Cardiac septum (tissue), 1 donor: ENCODE measurements at regions of chr11 and their contacts with region 1.

Region 1: DNA sequence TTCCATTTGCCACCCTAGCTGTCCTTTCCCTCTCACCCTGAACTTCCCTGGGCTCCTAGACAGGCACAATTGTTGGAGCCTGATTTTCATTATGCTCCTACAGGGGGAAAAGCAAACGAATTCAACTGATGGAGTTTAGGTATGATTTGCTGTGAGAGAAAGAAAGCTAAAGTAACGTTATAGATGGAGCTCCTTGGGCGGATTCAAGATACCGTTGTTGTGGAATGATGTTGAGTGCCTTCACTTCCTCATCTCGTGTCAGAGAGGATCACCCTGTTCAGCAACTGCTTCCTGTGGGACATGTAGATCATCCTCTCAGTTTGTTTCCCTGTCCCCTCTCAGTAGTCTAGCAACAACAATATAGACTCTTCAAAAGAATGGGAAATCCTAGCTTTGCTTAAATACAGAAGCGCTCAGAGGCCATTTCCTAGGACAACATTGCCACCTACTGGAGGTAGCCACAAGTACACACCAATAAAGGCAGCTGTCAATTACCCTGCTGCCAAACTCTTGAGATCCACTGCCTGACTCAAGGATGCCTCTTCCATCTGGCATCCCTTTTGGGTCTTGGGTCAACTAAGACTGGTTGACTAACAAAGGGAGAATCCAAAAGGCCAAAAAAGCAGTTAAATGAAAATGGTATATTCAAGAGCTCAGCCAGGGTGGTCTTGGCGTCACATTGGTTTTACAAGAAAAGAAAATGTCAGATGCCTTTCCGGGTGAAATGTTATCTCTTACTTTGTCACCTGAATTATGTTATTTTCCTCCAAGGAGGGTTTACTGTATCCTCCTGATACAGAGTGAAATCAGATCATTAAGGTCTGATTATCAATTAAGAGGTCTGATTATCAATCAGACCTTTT is 13.5 kb upstream of the DTX4 start:
- DNase-seq: no peak

Region 2: DNA sequence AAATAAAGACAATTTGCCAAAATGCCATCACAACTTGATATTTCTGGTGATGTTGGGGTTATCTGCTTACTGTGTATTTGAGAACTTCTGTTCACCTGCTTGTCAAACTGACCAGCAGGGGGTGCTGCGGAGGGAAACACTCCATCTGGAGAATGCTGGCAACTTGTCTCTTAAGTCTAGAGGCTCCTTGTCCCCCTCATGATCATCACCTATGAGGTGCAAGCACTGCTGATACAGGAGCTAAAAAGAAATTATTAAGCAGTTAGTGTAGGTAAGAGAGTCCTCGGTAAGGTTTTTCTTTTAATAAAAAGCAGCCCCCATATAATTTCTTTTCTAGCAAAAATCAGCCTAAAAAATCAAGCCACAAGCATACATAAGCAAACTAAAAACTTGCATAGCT is 105.0 kb before region 1 on chr11:
- intact Hi-C with region 1: loop called (anchors 5 kb)
- DNase-seq: no peak